Activated CD4-positive, alpha-beta T cell treated with anti-CD3 and anti-CD28 coated beads for 36 hours (primary cell): ENCODE measurements at regions of chr3 and their contacts with region 1.

Region 1: DNA sequence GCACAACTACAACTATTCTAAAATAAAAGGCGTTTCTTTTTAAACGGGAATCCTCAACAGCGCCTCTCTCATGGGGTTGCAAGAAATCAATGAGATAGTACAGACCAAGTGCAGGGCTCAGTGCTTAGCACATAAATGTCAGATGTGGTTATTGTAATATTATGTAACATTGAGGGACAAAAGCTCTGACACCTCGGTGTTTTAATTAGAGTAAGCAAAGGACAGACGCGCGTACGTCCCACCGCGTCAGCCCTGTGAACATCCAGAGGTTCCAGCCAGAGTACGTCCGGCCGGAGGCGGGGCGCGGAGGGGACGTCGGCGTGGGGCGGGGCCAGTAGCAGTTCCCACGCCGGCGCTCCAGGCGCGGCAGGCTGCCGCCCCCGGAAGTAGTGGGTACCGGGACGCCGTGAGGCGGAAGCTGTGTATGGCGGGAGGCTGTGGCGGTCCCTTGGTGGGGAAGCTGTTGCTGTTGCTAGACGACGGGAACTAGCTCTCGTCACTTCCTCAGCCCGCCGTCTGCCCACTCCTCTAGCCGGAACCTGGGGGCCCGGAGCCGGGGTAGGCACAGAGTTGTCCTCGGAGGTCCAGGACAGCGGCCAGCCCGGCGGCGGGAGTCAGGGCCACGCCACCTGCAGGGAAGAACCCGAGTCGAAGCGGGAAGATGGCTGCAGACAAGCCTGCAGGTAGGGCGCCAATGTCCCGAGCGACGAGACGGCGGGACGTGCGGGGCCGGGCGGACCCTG is at the start of gene CNOT10:
- DNase-seq: peak; percentile 98
- ATAC-seq: peak; percentile 96
- H3K4me3 Mint-ChIP-seq: peak within 1 kb of the TSS; percentile 88
- H3K27ac Mint-ChIP-seq: peak within 1 kb of the TSS; percentile 91
- H3K4me1 Mint-ChIP-seq: peaks cover 32% of the 10 kb centered on the region
- H3K27me3 Mint-ChIP-seq: no peaks in the 10 kb centered on the region
- total RNA-seq, gene CNOT10: 57.7 to 76.9 TPM

Region 2: GRCh38 chr3:32117324-32117723 is 567.6 kb before region 1 on chr3:
- CTCF ChIA-PET with region 1: no interaction called
- POLR2A ChIA-PET with region 1: no interaction called
- intact Hi-C with region 1: loop called in 1 of 2 experiments (anchors 2 kb)
- DNase-seq: no peak
- ATAC-seq: no peak
- H3K4me3 Mint-ChIP-seq: no peak overlapping the region
- H3K27ac Mint-ChIP-seq: no peak overlapping the region
- H3K4me1 Mint-ChIP-seq: peaks cover 55% of the 10 kb centered on the region
- H3K27me3 Mint-ChIP-seq: no peaks in the 10 kb centered on the region

Region 3: GRCh38 chr3:32502118-32502945 is 182.6 kb before region 1 on chr3 and contains the start of gene CMTM6:
- CTCF ChIA-PET with region 1: interaction called, 4 read pairs
- POLR2A ChIA-PET with region 1: no interaction called
- intact Hi-C with region 1: loop called (anchors 1 kb)
- DNase-seq: peak; percentile 87
- ATAC-seq: peak; percentile 80
- H3K4me3 Mint-ChIP-seq: peak within 1 kb of the TSS; percentile 86
- H3K27ac Mint-ChIP-seq: peak within 1 kb of the TSS; percentile 95
- H3K4me1 Mint-ChIP-seq: peaks cover 29% of the 10 kb centered on the region
- H3K27me3 Mint-ChIP-seq: no peaks in the 10 kb centered on the region
- total RNA-seq, gene CMTM6: 33.6 to 48.0 TPM

Region 4: GRCh38 chr3:32570421-32571191 is 114.4 kb before region 1 on chr3 and contains the start of gene DYNC1LI1:
- CTCF ChIA-PET with region 1: interaction called, 3 read pairs
- POLR2A ChIA-PET with region 1: no interaction called
- intact Hi-C with region 1: loop called (anchors 1 kb)
- DNase-seq: peak; percentile 96
- ATAC-seq: peak; percentile 96
- H3K4me3 Mint-ChIP-seq: peak within 1 kb of the TSS; percentile 78
- H3K27ac Mint-ChIP-seq: peak within 1 kb of the TSS; percentile 90
- H3K4me1 Mint-ChIP-seq: peaks cover 28% of the 10 kb centered on the region
- H3K27me3 Mint-ChIP-seq: no peaks in the 10 kb centered on the region
- total RNA-seq, gene DYNC1LI1: 31.8 to 31.9 TPM

Region 5: DNA sequence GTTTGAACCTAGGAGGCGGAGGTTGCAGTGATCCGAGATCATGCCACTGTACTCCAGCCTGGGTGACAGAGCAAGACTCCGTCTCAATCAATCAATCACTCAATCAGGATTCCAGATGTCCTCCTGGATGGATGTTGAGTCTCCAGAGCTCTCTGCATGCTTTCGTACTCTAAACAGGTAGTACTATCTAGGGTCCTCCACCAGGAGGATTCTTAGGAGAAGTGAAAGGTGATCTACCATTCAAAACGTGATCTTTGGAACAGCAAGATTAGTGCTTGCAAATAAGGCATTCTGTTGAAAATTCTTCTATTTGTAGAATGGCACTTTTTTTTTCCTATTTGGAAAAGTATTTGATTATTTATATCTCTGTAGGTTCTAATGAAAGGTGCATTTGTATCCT is 34.4 kb after region 1 on chr3:
- CTCF ChIA-PET with region 1: no interaction called
- POLR2A ChIA-PET with region 1: no interaction called
- intact Hi-C with region 1: no loop called
- DNase-seq: no peak
- ATAC-seq: no peak
- H3K4me3 Mint-ChIP-seq: no peak overlapping the region
- H3K27ac Mint-ChIP-seq: no peak overlapping the region
- H3K4me1 Mint-ChIP-seq: no peaks in the 10 kb centered on the region
- H3K27me3 Mint-ChIP-seq: no peaks in the 10 kb centered on the region

Region 6: GRCh38 chr3:32781210-32781968 is 96.4 kb after region 1 on chr3:
- CTCF ChIA-PET with region 1: interaction called, 3 read pairs
- POLR2A ChIA-PET with region 1: interaction called, 4 read pairs
- intact Hi-C with region 1: loop called in 1 of 2 experiments (anchors 2 kb)
- DNase-seq: peak; percentile 84
- ATAC-seq: peak; percentile 86
- H3K4me3 Mint-ChIP-seq: peak overlapping the region; percentile 79
- H3K27ac Mint-ChIP-seq: no peak overlapping the region
- H3K4me1 Mint-ChIP-seq: peaks cover 10% of the 10 kb centered on the region
- H3K27me3 Mint-ChIP-seq: peaks cover 12% of the 10 kb centered on the region

Region 7: DNA sequence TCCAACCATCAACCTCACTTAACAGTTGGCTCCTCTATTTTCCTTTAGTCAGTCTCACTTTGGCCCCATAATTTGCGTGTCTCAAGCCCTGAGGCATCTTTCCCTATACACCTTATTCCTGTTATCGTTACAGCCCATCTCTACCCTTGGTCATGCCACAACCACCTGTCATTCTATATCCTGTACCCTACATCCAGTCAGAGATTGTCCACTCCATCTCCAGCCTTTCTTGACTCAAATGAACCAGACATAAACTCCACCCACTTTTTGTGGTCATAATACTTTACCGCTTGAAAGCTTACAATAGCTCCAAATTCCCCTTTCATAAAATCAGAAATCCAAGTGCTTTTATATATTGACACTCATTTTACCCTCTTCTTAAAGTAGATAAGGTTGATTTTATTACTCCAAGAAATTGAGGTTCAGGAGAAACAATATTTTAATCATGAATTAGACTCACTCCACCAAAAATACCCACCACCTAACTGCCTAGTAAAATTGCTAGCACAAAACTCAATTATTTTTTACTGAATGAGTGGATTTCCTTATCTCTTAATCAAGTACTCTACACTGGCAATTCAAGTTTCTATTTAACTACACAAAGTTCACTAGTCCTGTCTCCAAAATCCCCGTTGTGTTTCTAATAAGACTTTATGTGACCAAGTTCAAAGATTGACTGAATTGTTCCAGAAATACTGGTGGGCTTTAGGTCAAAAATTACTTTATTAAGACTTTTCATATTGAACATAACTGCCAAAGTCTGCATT is 275.6 kb after region 1 on chr3:
- CTCF ChIA-PET with region 1: no interaction called
- POLR2A ChIA-PET with region 1: no interaction called
- intact Hi-C with region 1: no loop called
- DNase-seq: no peak
- ATAC-seq: peak; percentile 61
- H3K4me3 Mint-ChIP-seq: peak overlapping the region; percentile 8
- H3K27ac Mint-ChIP-seq: peak overlapping the region; percentile 97
- H3K4me1 Mint-ChIP-seq: peaks cover 77% of the 10 kb centered on the region
- H3K27me3 Mint-ChIP-seq: no peaks in the 10 kb centered on the region